Activated T-helper 1 cell treated with anti-CD3 and anti-CD28 coated beads, Interleukin-12 subunit alpha, Interleukin-12 subunit beta, Interleukin-2, Interleukin-4 antibody, amounts not matched to agents 30 ng/mL and 10 ng/mL and 1 ng/mL, durations not matched to agents 14 hours and 24 hours and 36 hours (primary cell): ENCODE measurements at regions of chr3 and their contacts with region 1.

Region 1: GRCh38 chr3:106013971-106014370 is 145.2 kb upstream of the CBLB start:
- DNase-seq: no peak
- H3K4me3 Mint-ChIP-seq: no peak overlapping the region
- H3K27ac Mint-ChIP-seq: peak overlapping the region; percentile 5
- H3K4me1 Mint-ChIP-seq: peaks cover 65% of the 10 kb centered on the region
- H3K27me3 Mint-ChIP-seq: no peaks in the 10 kb centered on the region

Region 2: DNA sequence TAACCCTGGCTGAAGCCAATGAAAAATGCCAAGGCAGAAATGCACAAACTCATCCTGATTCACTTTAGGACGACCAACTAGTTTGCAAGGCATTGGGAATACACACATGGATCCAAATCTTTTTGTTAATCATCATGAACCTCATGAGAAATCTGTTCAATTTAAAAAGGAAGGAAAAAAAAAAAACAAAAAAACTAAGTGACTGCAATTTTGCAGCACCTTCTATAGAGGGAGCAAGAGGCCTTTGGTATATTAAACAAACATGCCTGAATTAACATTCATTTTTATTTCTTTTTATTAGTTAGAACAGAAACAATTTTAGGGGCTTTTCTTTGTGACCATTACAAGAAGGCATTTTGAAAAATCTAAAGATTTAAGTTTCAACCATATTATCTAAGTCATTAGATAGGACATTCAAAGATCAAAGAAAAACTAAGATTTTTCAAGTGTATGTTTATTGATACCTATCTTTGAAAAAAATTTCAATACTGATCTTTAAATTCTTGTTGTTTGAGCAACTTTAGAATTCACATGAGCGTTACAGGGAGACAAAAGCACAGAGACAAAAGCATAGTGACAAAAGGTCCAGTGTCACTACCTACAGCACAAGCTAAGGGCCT is 327.6 kb before region 1 on chr3:
- intact Hi-C with region 1: loop called (anchors 2 kb)
- DNase-seq: no peak
- H3K4me3 Mint-ChIP-seq: no peak overlapping the region
- H3K27ac Mint-ChIP-seq: peak overlapping the region; percentile 54
- H3K4me1 Mint-ChIP-seq: peaks cover 32% of the 10 kb centered on the region
- H3K27me3 Mint-ChIP-seq: no peaks in the 10 kb centered on the region

Region 3: DNA sequence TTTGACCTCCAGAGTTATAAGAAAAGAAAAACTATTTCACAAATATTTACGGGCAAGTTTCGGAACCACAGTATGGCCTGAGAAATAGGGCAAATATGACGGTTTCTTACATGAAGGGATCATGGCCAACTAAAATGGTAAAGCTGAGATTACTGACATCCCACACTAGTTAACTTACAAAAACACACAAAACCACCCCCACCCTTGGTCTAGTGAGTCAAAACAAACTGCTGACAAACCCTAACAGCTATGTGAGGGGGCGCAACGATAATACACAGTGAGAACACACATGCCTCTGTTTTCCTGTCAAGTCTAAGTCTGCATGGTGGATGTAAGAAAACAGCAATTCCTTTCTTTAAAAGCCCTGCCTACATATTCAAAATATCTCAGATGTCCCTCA is 177.4 kb before region 1 on chr3:
- intact Hi-C with region 1: loop called (anchors 2 kb)
- DNase-seq: peak; percentile 27
- H3K4me3 Mint-ChIP-seq: peak overlapping the region; percentile 71
- H3K27ac Mint-ChIP-seq: peak overlapping the region; percentile 93
- H3K4me1 Mint-ChIP-seq: peaks cover 85% of the 10 kb centered on the region
- H3K27me3 Mint-ChIP-seq: no peaks in the 10 kb centered on the region

Region 4: GRCh38 chr3:105853801-105854432 is 160.1 kb before region 1 on chr3:
- intact Hi-C with region 1: no loop called
- DNase-seq: no peak
- H3K4me3 Mint-ChIP-seq: no peak overlapping the region
- H3K27ac Mint-ChIP-seq: no peak overlapping the region
- H3K4me1 Mint-ChIP-seq: peaks cover 56% of the 10 kb centered on the region
- H3K27me3 Mint-ChIP-seq: no peaks in the 10 kb centered on the region

Region 5: DNA sequence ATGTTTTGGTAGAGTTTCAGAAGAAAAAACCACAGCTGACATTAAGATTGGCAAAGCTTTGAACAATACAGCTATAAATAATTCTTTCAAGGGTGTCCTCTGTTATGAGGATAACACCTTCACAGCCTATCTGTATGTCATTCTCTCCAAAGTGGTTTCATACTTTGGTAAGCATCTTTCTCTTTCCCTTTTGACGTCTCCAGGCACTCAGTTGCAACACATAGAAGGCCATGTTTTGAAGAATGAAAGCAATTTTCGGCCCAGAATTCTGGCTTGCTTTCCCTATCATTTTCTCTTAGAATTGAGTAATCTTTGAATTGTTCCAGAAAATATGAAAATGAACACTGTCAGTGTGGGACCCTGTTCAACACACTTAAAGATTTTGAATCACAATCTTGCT is 54.8 kb after region 1 on chr3:
- intact Hi-C with region 1: loop called (anchors 2 kb)
- DNase-seq: peak; percentile 3
- H3K4me3 Mint-ChIP-seq: no peak overlapping the region
- H3K27ac Mint-ChIP-seq: peak overlapping the region; percentile 87
- H3K4me1 Mint-ChIP-seq: peaks cover 15% of the 10 kb centered on the region
- H3K27me3 Mint-ChIP-seq: no peaks in the 10 kb centered on the region

Region 6: GRCh38 chr3:106157411-106157810 is 143.4 kb after region 1 on chr3:
- intact Hi-C with region 1: no loop called
- DNase-seq: no peak
- H3K4me3 Mint-ChIP-seq: no peak overlapping the region
- H3K27ac Mint-ChIP-seq: no peak overlapping the region
- H3K4me1 Mint-ChIP-seq: no peaks in the 10 kb centered on the region
- H3K27me3 Mint-ChIP-seq: no peaks in the 10 kb centered on the region

Region 7: GRCh38 chr3:106193876-106194275 is 179.9 kb after region 1 on chr3:
- intact Hi-C with region 1: no loop called
- DNase-seq: no peak
- H3K4me3 Mint-ChIP-seq: no peak overlapping the region
- H3K27ac Mint-ChIP-seq: no peak overlapping the region
- H3K4me1 Mint-ChIP-seq: peaks cover 33% of the 10 kb centered on the region
- H3K27me3 Mint-ChIP-seq: no peaks in the 10 kb centered on the region

Region 8: GRCh38 chr3:106206146-106206545 is 192.2 kb after region 1 on chr3:
- intact Hi-C with region 1: loop called (anchors 1 kb)
- DNase-seq: no peak
- H3K4me3 Mint-ChIP-seq: peak overlapping the region; percentile 54
- H3K27ac Mint-ChIP-seq: peak overlapping the region; percentile 92
- H3K4me1 Mint-ChIP-seq: peaks cover 58% of the 10 kb centered on the region
- H3K27me3 Mint-ChIP-seq: no peaks in the 10 kb centered on the region

Region 9: GRCh38 chr3:106423321-106424225 is 409.6 kb after region 1 on chr3:
- intact Hi-C with region 1: loop called (anchors 1 kb)
- DNase-seq: no peak
- H3K4me3 Mint-ChIP-seq: peak overlapping the region; percentile 45
- H3K27ac Mint-ChIP-seq: peak overlapping the region; percentile 90
- H3K4me1 Mint-ChIP-seq: peaks cover 50% of the 10 kb centered on the region
- H3K27me3 Mint-ChIP-seq: no peaks in the 10 kb centered on the region